ENCODE measurements at regions of chr3 and their contacts with region 1.

Region 1: DNA sequence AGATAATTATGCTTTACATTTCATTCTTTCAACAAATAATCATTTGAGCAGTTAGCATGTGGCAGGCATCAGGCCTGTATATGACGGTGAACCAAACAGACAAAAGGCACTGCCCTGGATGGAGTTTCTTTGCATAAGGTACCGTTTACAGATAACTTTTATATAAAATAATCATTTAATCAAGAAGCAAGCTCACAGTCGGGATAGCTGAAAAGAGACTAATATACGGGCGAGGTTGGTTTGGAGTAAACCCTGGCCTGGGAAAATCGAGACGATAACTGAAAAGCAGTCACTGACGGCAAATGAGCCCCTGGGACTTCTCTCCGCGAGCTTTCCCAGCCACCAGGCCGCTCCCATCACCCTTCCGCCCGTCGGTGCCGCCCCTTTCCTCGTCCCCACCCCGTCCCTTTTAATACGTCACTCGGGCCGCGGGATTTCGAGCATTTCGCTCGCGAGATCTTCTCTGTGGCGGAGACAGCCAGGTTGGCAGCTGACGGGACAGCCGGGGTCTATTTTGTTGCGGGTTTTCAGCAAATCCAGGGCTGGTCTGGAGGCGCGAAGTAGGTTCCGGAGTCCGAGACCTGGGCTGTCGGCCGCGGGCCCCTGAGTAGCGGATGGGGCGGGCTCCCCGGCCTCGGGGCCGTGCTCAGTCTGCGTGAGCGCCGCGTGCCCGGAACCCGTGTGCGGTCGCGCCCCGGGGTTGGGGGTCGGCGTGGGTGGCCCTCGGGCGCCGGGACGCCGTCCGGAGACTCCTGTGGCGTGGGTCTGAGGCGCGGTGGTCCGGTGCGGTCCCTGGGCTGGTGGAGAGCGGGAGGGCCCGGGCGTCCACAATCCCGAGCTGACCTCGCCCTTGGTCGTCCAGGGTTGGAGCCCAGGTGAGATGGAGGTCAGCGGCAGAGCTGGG is at the start of gene NMD3:
- DNase-seq: peak; percentile 77 to 96 (median 94)
- H3K4me3 ChIP-seq: peak within 1 kb of the TSS; percentile 64 to 99 (median 93)
- H3K27ac ChIP-seq: peak within 1 kb of the TSS; percentile 20 to 97 (median 87)
- H3K27me3 ChIP-seq: no peaks in the 10 kb centered on the region
- CTCF ChIP-seq: peak in 12 of 56 donors; percentile 8 to 33 (median 20)
- total RNA-seq, gene NMD3: 32.8 to 69.9 (median 50.7) TPM

Region 2: DNA sequence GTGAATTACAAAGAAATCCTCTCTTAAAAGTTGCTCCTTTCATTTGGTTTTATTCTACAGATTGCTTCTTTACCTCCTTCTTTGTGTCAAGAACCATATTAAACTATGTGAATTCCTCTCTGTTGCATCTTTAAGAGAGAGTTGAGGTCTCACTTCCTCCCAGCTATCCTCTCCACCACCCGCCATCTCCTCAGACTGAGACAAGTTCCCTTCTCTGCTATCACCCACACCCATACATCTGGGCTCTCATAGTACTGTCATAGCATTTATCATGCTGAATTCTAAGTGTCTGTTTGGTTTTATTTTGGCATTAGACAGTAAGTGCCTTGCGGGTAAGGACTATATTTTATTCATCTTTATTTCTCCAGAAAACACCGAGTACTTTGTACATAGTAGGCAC is 170.2 kb before region 1 on chr3:
- intact Hi-C with region 1: no loop called
- DNase-seq: no peak
- H3K4me3 ChIP-seq: no peak overlapping the region
- H3K27ac ChIP-seq: no peak overlapping the region
- H3K27me3 ChIP-seq: no peaks in the 10 kb centered on the region
- CTCF ChIP-seq: no peak

Region 3: DNA sequence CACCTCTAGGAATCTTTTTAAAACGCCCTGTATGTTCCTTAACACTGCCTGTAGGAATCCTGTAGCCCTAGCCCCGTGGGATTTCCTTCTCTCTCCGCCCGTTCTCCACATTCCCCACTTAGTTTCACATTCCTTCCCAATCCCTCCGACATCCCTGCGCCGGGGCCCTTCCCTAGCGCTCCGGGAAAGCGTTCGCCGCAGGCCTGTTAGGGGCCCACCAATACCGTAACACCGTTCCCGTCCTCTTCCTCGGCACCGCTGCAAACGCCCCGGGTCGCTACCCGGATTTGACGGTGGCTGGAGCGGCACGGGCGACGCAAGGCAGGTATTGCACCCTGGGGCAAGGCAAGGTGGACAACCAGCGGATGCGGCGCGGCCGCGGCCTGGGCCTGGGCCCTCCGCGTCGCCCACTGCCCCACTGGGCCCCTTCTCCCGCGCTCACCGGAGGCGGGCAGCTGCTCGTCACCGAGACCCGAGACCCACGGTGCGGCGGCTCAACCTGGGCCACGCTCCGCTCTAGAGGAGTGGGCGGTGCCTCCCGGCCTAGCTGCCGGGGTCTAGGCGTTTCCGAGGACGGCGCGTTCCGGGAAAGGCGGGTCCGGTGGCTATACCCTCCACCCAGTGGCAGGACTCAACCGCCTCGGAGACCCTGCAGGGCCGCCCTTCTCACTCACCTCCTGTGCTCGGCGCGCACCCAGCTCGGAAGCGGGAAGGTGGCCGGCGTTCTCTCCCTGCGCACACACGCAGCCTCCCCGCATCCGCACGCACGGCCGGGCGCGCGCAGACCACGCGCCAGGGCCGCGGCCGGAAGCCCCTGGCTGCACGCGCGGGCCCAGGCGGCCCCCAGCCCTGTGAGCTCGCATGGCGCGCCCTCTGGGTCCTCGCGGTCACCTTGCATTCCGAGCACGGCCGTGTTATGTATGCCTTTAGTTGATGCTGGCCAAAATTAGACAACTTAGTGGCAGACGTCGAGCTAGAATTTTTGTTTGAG is 116.2 kb before region 1 on chr3 and contains the start of gene B3GALNT1:
- intact Hi-C with region 1: loop called in 1 of 2 experiments (anchors 10 kb)
- DNase-seq: peak in 7 of 10 donors; percentile 24 to 68 (median 46)
- H3K4me3 ChIP-seq: peak within 1 kb of the TSS; percentile 50 to 94 (median 81)
- H3K27ac ChIP-seq: peak within 1 kb of the TSS in 57 of 59 donors; percentile 17 to 91 (median 73)
- H3K27me3 ChIP-seq: no peaks in the 10 kb centered on the region
- CTCF ChIP-seq: peak in 3 of 56 donors; percentile 7 to 16 (median 9)
- total RNA-seq, gene B3GALNT1: 26.6 to 74.6 (median 49.2) TPM

Measured in dorsolateral prefrontal cortex (tissue), 120 donors.